CD4-positive, alpha-beta T cell (primary cell): ENCODE measurements at regions of chr14 and their contacts with region 1.

Region 1: DNA sequence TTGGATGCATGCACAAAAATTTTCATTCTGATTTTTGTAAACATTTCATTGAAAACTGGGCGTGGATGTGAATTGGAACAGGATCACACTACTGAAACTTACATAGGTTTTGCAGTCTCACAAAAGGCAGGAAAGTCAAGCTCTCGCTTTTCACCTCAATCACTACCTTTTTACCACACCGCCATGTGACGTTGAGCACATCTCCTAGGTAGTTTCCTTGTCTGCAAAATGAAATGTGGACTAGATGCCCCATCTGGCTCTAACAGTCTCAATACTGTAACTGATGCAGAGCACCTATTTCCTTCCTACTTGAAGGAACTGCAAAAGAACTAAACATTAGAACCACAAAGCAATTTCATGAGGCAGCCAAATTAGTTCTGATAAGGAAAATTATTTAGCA is 4.4 kb upstream of the YY1 start:
- DNase-seq: peak in 4 of 14 experiments; percentile 18 to 69 (median 58)
- ATAC-seq: no peak
- H3K4me3 ChIP-seq: no peak overlapping the region
- H3K4me3 Mint-ChIP-seq: peak overlapping the region; percentile 76
- H3K27ac ChIP-seq: no peak overlapping the region
- H3K27ac Mint-ChIP-seq: peak overlapping the region; percentile 88
- H3K4me1 ChIP-seq: peaks cover 33% of the 10 kb centered on the region
- H3K4me1 Mint-ChIP-seq: peaks cover 58% of the 10 kb centered on the region
- H3K27me3 ChIP-seq: no peaks in the 10 kb centered on the region
- H3K27me3 Mint-ChIP-seq: no peaks in the 10 kb centered on the region
- CTCF ChIP-seq: no peak

Region 2: DNA sequence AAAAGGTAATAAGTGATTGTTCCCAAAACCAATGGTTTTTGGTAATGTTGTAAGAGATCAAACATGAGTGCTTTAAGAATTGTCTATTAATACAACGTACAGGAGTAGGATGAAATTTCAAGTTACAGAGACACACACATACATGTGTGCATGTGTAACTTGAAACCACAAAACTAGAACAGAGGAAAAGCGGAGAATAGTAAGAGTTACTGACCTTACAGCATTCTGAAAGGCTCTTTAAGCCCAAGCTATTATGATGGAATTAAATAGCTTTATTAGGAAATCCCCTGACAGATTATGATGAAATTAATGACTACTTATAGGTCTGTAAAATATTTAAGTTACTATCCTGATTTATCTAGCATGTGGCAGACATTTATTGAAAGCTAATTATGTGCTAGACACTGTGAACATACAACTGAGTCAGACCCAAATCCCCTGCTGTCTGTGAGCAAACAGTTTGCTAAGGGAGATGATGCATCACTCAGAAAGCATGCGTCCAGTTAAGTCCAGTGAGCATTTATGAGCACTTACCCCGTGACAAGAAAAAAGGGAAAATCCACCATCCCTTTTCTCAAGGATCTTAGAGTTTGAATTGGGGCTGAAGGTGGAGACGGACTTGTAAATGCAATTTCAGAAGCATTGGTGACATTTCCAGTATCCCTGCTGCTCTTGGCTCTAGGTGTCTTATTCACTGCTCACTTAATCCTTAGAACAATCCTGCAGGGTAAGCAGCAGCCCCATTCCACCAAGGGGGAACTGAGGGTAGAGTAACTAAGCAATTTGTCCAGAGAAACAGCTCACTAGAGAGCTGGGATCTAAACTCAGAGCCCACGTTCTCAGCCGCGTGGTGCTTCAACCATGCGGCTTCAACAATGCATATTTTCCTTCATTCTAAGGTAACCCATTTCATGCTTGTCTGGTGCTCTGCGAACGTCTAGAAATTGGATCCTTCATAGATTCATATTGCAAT is 323.9 kb before region 1 on chr14:
- CTCF ChIA-PET with region 1: no interaction called
- POLR2A ChIA-PET with region 1: no interaction called
- intact Hi-C with region 1: no loop called
- DNase-seq: no peak
- ATAC-seq: no peak
- H3K4me3 ChIP-seq: no peak overlapping the region
- H3K4me3 Mint-ChIP-seq: no peak overlapping the region
- H3K27ac ChIP-seq: no peak overlapping the region
- H3K27ac Mint-ChIP-seq: no peak overlapping the region
- H3K4me1 ChIP-seq: no peaks in the 10 kb centered on the region
- H3K4me1 Mint-ChIP-seq: no peaks in the 10 kb centered on the region
- H3K27me3 ChIP-seq: peaks cover 0 to 3% of the 10 kb centered on the region in 2 experiments
- H3K27me3 Mint-ChIP-seq: peaks cover 5% of the 10 kb centered on the region
- CTCF ChIP-seq: no peak

Region 3: DNA sequence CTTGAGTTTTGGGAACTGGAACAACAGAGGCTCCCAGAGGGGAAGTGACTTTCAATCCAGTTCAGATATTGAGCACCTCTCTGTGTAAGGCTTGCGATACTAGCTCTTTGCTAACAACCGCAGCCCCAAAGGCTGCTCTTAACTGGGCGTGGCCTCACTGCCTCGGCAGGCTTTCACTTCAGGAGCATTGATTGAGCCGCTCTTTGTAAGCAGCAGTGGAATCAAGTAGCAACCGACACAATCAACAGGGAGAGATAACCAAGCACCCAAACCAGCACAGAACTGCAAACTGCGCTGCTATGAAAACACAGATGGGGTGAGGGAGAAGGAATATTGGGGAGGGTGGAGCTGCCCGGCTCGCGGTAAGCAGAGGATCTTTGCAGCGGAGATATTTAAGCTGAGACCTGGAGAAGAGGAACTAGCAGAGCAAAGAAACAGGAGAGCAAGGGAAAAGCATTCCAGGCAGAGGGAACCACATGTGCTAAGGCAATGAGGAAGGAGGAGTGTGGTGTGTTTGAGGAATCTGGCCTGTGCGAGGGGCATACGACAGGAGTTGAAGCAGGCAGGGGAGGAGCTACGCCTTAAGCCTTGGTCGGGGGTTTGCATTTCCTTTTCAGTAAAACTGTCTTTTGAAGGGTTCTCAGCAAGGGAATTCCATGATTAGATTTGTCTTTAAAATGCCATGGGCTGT is 12.8 kb before region 1 on chr14:
- CTCF ChIA-PET with region 1: interaction called, 8 read pairs
- POLR2A ChIA-PET with region 1: interaction called, 151 read pairs
- intact Hi-C with region 1: loop called (anchors 1 to 2 kb)
- DNase-seq: peak; percentile 52 to 87 (median 68)
- ATAC-seq: peak; percentile 94
- H3K4me3 ChIP-seq: peak overlapping the region; percentile 73
- H3K4me3 Mint-ChIP-seq: no peak overlapping the region
- H3K27ac ChIP-seq: peak overlapping the region; percentile 63 to 64
- H3K27ac Mint-ChIP-seq: no peak overlapping the region
- H3K4me1 ChIP-seq: peaks cover 59% of the 10 kb centered on the region
- H3K4me1 Mint-ChIP-seq: peaks cover 6% of the 10 kb centered on the region
- H3K27me3 ChIP-seq: no peaks in the 10 kb centered on the region
- H3K27me3 Mint-ChIP-seq: no peaks in the 10 kb centered on the region
- CTCF ChIP-seq: no peak